ENCODE measurements at regions of chr2 and their contacts with region 1.

Region 1: GRCh38 chr2:42722320-42723190 is 41.4 kb downstream of the OXER1 start:
- DNase-seq: no peak

Region 2: GRCh38 chr2:42706836-42707235 is 15.7 kb before region 1 on chr2:
- intact Hi-C with region 1: no loop called
- DNase-seq: no peak

Region 3: DNA sequence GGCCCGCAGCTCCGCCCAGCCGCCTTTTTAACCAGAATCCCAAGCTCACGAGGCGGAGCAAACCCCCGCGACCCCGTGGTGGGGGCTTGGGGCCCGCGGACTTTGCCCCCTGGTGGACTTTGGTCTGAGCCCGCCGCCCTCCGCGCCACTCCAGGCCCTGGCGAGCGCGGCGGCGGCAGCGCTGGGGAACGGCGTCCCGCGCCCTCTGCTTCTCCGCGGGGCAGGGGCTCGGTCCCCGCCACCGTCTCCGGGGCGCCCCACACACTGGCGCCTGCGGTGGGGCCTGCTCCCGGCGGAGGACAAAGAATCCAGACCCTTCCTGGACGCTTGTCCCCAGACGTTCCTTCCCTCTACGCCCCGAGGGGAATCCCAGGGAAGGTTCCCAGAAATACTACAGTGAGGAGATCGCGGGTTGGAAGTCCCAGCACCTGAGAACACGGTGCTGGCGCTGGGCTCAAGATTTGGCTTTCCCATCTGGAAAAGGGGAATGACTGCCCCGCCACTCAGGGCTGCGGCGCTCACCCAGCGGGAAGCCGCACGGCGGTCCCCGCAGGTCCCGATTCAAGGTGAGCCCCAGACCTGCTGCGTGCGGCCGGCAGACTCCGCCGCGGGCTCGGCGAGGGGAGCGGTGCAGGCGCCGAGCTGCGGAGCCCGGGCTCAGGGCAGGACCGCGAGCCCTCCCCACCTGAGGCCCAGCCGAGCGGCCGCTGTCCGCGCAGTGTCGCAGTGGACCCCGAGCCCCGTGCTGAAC is 70.2 kb after region 1 on chr2 and contains the start of gene HAAO:
- intact Hi-C with region 1: loop called in 1 of 2 experiments (anchors 10 kb)
- DNase-seq: peak; percentile 88
- total RNA-seq, gene HAAO: 5.1 to 15.0 TPM

Region 4: DNA sequence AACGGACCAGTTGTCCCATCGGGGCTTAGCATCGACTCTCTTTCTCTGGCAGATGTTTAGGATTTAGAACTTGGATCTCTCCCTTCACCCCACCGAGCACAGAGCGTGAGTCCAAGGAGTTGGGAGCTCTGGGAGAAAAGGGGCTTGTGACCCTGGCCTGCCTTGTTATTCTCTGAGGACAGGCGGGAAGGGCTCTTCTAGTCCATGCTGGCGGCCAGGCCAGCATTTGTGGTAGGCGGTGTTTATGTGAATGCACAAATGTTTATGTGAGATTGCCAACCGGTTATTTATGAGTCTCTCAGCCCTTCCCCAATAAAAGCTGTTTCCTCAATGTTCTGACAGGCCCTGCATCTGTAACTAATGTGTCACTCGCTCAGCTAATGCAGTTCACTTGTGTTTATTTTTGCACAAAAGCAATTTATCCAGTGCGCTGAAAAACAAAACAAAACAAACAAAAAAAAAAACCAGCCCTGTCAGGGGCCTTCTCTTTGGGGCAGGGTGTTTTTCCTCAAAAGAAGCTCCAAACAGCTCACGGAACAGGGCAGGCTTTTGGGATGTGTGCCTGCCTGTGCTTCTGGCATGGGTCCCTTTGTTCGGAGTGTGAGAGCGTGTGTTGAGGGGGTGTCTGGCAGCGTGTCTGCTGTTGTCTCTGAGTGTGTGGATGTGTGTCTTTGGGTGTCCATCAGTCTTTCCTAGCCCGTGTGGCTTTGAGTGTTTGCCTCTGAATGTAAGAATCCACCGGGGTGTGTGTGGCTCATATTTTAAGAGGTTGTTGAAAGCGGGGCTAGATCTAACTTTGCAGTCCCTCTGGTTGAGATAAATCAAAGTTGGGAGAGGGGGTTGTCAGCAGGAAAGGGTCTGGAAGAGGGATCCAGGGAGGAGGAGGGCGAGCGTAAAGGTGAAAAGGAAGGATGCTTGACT is 122.6 kb after region 1 on chr2:
- intact Hi-C with region 1: no loop called
- DNase-seq: no peak

Region 5: GRCh38 chr2:42944779-42945415 is 222.3 kb after region 1 on chr2:
- intact Hi-C with region 1: no loop called
- DNase-seq: no peak

Measured in posterior vena cava (tissue), 2 donors.